Activated T-helper 2 cell treated with anti-CD3 and anti-CD28 coated beads, Interferon-gamma antibody, Interleukin-2, Interleukin-4, amounts not matched to agents 10 μg/mL and 5 μg/mL and 100 μg/mL, durations not matched to agents 14 hours and 24 hours and 36 hours (primary cell): ENCODE measurements at regions of chr17 and their contacts with region 1.

Region 1: DNA sequence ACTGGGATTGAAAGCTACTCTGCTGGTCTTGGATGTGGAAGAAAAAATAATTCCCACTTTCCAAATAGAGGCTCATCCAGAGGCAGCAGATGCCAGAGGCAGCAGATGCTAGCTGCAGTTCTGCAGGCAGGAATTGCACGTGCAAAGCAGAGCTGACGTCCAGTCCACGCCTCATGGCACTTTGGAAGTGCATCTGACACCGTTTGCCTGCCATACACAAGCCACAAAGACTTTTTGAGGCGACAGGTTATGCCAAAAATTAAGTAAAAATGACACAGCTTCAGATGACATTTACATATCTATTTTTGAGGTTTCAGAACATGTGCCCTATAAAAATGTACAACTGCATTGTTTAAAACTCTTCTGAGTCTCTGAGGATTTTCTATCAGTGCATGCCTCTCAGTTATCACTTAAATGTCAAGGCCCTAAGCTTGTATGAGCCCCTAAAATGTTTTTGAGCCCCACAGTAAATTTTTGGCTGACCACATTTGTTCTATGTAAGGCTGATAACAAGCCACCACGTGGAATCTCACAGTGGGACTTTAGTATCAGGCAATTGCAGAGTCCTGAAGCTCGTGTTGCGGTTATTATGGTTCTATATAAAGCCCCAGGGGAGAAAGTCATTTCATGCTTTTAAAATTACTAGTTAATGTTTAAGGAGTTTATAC is 239.2 kb downstream of the PRKCA start:
- DNase-seq: no peak
- H3K4me3 Mint-ChIP-seq: no peak overlapping the region
- H3K27ac Mint-ChIP-seq: peak overlapping the region; percentile 60
- H3K4me1 Mint-ChIP-seq: peaks cover 45% of the 10 kb centered on the region
- H3K27me3 Mint-ChIP-seq: no peaks in the 10 kb centered on the region

Region 2: GRCh38 chr17:66200685-66201092 is 340.9 kb before region 1 on chr17:
- intact Hi-C with region 1: loop called (anchors 10 kb)
- DNase-seq: peak; percentile 25
- H3K4me3 Mint-ChIP-seq: no peak overlapping the region
- H3K27ac Mint-ChIP-seq: no peak overlapping the region
- H3K4me1 Mint-ChIP-seq: peaks cover 12% of the 10 kb centered on the region
- H3K27me3 Mint-ChIP-seq: peaks cover 2% of the 10 kb centered on the region

Region 3: GRCh38 chr17:66373944-66374817 is 167.4 kb before region 1 on chr17:
- intact Hi-C with region 1: loop called (anchors 5 kb)
- DNase-seq: peak; percentile 53
- H3K4me3 Mint-ChIP-seq: peak overlapping the region; percentile 64
- H3K27ac Mint-ChIP-seq: peak overlapping the region; percentile 89
- H3K4me1 Mint-ChIP-seq: peaks cover 67% of the 10 kb centered on the region
- H3K27me3 Mint-ChIP-seq: no peaks in the 10 kb centered on the region

Region 4: GRCh38 chr17:66426397-66427033 is 115.1 kb before region 1 on chr17:
- intact Hi-C with region 1: loop called (anchors 10 kb)
- DNase-seq: peak; percentile 40
- H3K4me3 Mint-ChIP-seq: peak overlapping the region; percentile 14
- H3K27ac Mint-ChIP-seq: peak overlapping the region; percentile 62
- H3K4me1 Mint-ChIP-seq: peaks cover 70% of the 10 kb centered on the region
- H3K27me3 Mint-ChIP-seq: no peaks in the 10 kb centered on the region

Region 5: GRCh38 chr17:66493991-66494803 is 47.4 kb before region 1 on chr17:
- intact Hi-C with region 1: loop called (anchors 10 kb)
- DNase-seq: no peak
- H3K4me3 Mint-ChIP-seq: peak overlapping the region; percentile 2
- H3K27ac Mint-ChIP-seq: peak overlapping the region; percentile 67
- H3K4me1 Mint-ChIP-seq: peaks cover 38% of the 10 kb centered on the region
- H3K27me3 Mint-ChIP-seq: no peaks in the 10 kb centered on the region

Region 6: GRCh38 chr17:66514227-66514806 is 27.3 kb before region 1 on chr17:
- intact Hi-C with region 1: loop called (anchors 1 kb)
- DNase-seq: no peak
- H3K4me3 Mint-ChIP-seq: no peak overlapping the region
- H3K27ac Mint-ChIP-seq: peak overlapping the region; percentile 69
- H3K4me1 Mint-ChIP-seq: peaks cover 70% of the 10 kb centered on the region
- H3K27me3 Mint-ChIP-seq: no peaks in the 10 kb centered on the region

Region 7: GRCh38 chr17:66602659-66603384 is 61.2 kb after region 1 on chr17:
- intact Hi-C with region 1: no loop called
- DNase-seq: no peak
- H3K4me3 Mint-ChIP-seq: no peak overlapping the region
- H3K27ac Mint-ChIP-seq: no peak overlapping the region
- H3K4me1 Mint-ChIP-seq: peaks cover 2% of the 10 kb centered on the region
- H3K27me3 Mint-ChIP-seq: no peaks in the 10 kb centered on the region